ENCODE measurements at regions of chr2 and their contacts with region 1.

Region 1: GRCh38 chr2:174341286-174341994 is 6.7 kb downstream of the SP9 start:
- H3K4me3 Mint-ChIP-seq: peak overlapping the region; percentile 67
- H3K27ac Mint-ChIP-seq: no peak overlapping the region
- H3K4me1 Mint-ChIP-seq: peaks cover 46% of the 10 kb centered on the region
- H3K27me3 Mint-ChIP-seq: peaks cover 83% of the 10 kb centered on the region

Region 2: GRCh38 chr2:173402405-173402974 is 939.0 kb before region 1 on chr2:
- intact Hi-C with region 1: loop called (anchors 2 kb)
- H3K4me3 Mint-ChIP-seq: peak overlapping the region; percentile 37
- H3K27ac Mint-ChIP-seq: no peak overlapping the region
- H3K4me1 Mint-ChIP-seq: peaks cover 7% of the 10 kb centered on the region
- H3K27me3 Mint-ChIP-seq: peaks cover 70% of the 10 kb centered on the region

Region 3: DNA sequence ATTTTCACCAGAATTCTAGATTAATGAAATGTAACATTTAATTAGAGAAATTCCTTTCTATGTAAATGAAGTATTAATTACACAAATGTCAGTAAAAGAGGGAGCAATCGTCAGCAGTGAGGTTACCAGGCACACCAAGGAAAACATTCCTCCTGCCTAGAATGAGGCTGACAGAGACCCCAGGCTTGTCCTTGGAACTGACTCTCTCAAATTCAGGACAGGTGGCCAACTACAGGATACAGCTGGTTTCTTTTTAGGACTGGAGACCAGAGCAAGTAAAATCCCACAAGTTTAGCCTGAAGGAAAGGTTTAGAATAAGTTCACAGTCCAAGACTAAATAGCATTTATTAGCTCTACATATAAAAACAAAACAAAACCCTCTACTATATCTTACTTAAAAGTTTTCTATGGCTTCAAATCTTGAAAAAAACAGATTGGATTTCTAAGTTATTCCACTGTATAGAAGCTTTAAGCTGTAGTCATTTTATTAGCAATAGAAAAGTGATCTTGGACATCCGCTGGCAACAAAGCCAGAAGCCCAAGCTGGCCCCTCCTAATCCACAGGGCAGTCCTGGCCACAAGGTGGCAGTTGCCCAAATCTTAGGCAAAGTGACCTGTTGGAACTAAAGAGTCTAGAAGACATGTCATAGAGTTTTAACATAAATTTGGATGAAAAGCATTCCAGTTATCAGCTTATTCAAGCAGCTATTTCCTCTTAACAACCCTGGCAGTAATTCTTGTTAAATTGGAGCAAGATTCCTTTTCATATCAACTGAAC is 457.2 kb before region 1 on chr2:
- intact Hi-C with region 1: loop called (anchors 5 kb)
- H3K4me3 Mint-ChIP-seq: no peak overlapping the region
- H3K27ac Mint-ChIP-seq: no peak overlapping the region
- H3K4me1 Mint-ChIP-seq: peaks cover 16% of the 10 kb centered on the region
- H3K27me3 Mint-ChIP-seq: no peaks in the 10 kb centered on the region

Region 4: GRCh38 chr2:174138161-174138560 is 203.3 kb before region 1 on chr2:
- intact Hi-C with region 1: loop called (anchors 1 kb)
- H3K4me3 Mint-ChIP-seq: no peak overlapping the region
- H3K27ac Mint-ChIP-seq: no peak overlapping the region
- H3K4me1 Mint-ChIP-seq: no peaks in the 10 kb centered on the region
- H3K27me3 Mint-ChIP-seq: no peaks in the 10 kb centered on the region